Mammary epithelial cell (primary cell): ENCODE measurements at regions of chr21 and their contacts with region 1.

Region 1: GRCh38 chr21:37614351-37614875 is 247.8 kb downstream of the DYRK1A start:
- DNase-seq: no peak
- H3K4me3 ChIP-seq: no peak overlapping the region
- H3K27ac ChIP-seq: no peak overlapping the region
- H3K4me1 ChIP-seq: peaks cover 4% of the 10 kb centered on the region
- H3K27me3 ChIP-seq: peaks cover 2% of the 10 kb centered on the region
- CTCF ChIP-seq: no peak

Region 2: DNA sequence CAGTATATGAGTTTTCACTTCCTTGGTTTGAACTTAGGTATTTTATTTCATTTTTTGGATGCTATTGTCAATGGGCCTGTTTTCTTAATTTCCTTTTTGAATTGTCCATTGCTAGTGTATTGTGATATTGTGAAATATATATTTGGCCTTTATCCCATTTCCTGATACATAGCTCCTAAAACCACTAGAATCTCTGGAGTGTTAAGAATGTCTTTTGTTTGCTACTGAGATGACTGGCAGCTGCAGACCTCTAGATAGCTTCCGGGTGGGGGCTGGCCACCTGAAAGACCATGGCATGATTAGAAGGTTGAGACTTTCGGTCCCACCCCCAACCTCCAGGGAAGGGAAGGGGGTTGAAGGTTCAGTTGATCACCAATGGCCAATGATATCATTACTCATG is 56.5 kb after region 1 on chr21:
- CTCF ChIA-PET with region 1: no interaction called
- dilution Hi-C with region 1: loop called (anchors 5 kb)
- in situ Hi-C with region 1: no loop called
- intact Hi-C with region 1: no loop called
- DNase-seq: peak; percentile 25
- H3K4me3 ChIP-seq: no peak overlapping the region
- H3K27ac ChIP-seq: peak overlapping the region; percentile 32
- H3K4me1 ChIP-seq: peaks cover 29% of the 10 kb centered on the region
- H3K27me3 ChIP-seq: no peaks in the 10 kb centered on the region
- CTCF ChIP-seq: no peak

Region 3: DNA sequence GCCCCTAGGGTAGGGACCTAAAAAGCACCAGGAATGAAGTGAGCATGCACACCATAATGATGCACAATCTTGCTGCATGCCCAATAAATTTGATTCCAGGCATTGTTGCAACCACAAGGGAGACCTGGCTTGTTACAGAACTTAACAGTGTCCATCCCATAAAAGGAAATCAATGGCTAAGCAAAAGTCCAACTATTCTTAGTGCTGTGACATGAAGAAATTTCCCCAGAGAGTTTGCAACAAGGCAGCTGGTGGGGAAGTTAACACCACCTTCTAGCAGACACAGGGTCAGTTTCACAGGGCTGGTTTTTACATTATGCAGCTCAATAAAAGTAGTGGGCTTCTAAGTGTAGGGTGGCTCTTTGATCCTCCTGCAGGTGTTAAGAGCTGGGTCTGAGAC is 80.7 kb after region 1 on chr21:
- CTCF ChIA-PET with region 1: no interaction called
- dilution Hi-C with region 1: no loop called
- in situ Hi-C with region 1: no loop called
- intact Hi-C with region 1: no loop called
- DNase-seq: no peak
- H3K4me3 ChIP-seq: no peak overlapping the region
- H3K27ac ChIP-seq: no peak overlapping the region
- H3K4me1 ChIP-seq: no peaks in the 10 kb centered on the region
- H3K27me3 ChIP-seq: no peaks in the 10 kb centered on the region
- CTCF ChIP-seq: no peak